ENCODE measurements at regions of chr22 and their contacts with region 1.

Region 1: DNA sequence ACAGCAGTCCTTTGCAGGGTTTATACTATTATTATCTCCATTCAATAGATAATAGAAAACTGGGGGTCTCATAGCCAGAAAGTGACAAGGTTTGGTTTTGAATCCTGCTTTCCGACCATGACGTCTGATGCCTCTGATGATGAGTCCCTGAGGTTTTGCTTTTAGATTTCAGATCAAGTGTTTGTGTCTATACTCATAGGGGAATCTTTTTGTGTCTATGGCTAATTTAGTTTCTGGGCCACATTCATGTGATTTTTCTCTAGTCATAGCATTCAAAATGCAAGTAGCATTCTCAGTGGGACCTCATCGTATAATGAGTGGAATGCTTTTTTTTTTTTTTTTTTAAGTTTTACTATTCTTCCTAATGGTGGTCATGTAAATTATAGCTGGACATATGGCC is 72.9 kb downstream of the TNRC6B start:
- DNase-seq: no peak
- H3K4me3 Mint-ChIP-seq: no peak overlapping the region
- H3K27ac Mint-ChIP-seq: peak overlapping the region; percentile 10
- H3K4me1 Mint-ChIP-seq: peaks cover 58% of the 10 kb centered on the region
- H3K27me3 Mint-ChIP-seq: no peaks in the 10 kb centered on the region

Region 2: GRCh38 chr22:40203572-40203971 is 47.0 kb before region 1 on chr22:
- intact Hi-C with region 1: loop called (anchors 2 kb)
- DNase-seq: peak; percentile 38
- H3K4me3 Mint-ChIP-seq: peak overlapping the region; percentile 36
- H3K27ac Mint-ChIP-seq: peak overlapping the region; percentile 76
- H3K4me1 Mint-ChIP-seq: peaks cover 49% of the 10 kb centered on the region
- H3K27me3 Mint-ChIP-seq: no peaks in the 10 kb centered on the region

Region 3: GRCh38 chr22:40289991-40290459 is 39.4 kb after region 1 on chr22:
- intact Hi-C with region 1: loop called (anchors 5 kb)
- DNase-seq: peak; percentile 61
- H3K4me3 Mint-ChIP-seq: peak overlapping the region; percentile 65
- H3K27ac Mint-ChIP-seq: peak overlapping the region; percentile 95
- H3K4me1 Mint-ChIP-seq: peaks cover 55% of the 10 kb centered on the region
- H3K27me3 Mint-ChIP-seq: no peaks in the 10 kb centered on the region

Region 4: GRCh38 chr22:40361100-40361499 is 110.5 kb after region 1 on chr22:
- intact Hi-C with region 1: no loop called
- DNase-seq: no peak
- H3K4me3 Mint-ChIP-seq: no peak overlapping the region
- H3K27ac Mint-ChIP-seq: no peak overlapping the region
- H3K4me1 Mint-ChIP-seq: no peaks in the 10 kb centered on the region
- H3K27me3 Mint-ChIP-seq: no peaks in the 10 kb centered on the region

Measured in activated T-helper 1 cell treated with anti-CD3 and anti-CD28 coated beads, Interleukin-12 subunit alpha, Interleukin-12 subunit beta, Interleukin-2, Interleukin-4 antibody, amounts not matched to agents 30 ng/mL and 10 ng/mL and 1 ng/mL, durations not matched to agents 14 hours and 24 hours and 36 hours (primary cell).